Activated CD4-positive, alpha-beta memory T cell treated with anti-CD3 and anti-CD28 coated beads for 36 hours (primary cell): ENCODE measurements at regions of chr14 and their contacts with region 1.

Region 1: GRCh38 chr14:21103710-21104447 is 3.0 kb downstream of the TMEM253 start:
- DNase-seq: peak; percentile 96
- H3K4me3 Mint-ChIP-seq: peak overlapping the region; percentile 85
- H3K27ac Mint-ChIP-seq: peak overlapping the region; percentile 76
- H3K4me1 Mint-ChIP-seq: peaks cover 41% of the 10 kb centered on the region
- H3K27me3 Mint-ChIP-seq: no peaks in the 10 kb centered on the region

Region 2: GRCh38 chr14:20454516-20455354 is 649.1 kb before region 1 on chr14 and contains the starts of genes APEX1 and OSGEP:
- CTCF ChIA-PET with region 1: no interaction called
- POLR2A ChIA-PET with region 1: no interaction called
- intact Hi-C with region 1: loop called (anchors 10 kb)
- DNase-seq: peak; percentile 99
- H3K4me3 Mint-ChIP-seq: peak within 1 kb of the TSS; percentile 13
- H3K27ac Mint-ChIP-seq: no peak within 1 kb of the TSS
- H3K4me1 Mint-ChIP-seq: peaks cover 22% of the 10 kb centered on the region
- H3K27me3 Mint-ChIP-seq: no peaks in the 10 kb centered on the region
- total RNA-seq, gene APEX1: 186 to 193 TPM
- total RNA-seq, gene OSGEP: 39.2 to 41.0 TPM

Region 3: GRCh38 chr14:20873370-20874177 is 230.3 kb before region 1 on chr14:
- CTCF ChIA-PET with region 1: interaction called, 4 read pairs
- POLR2A ChIA-PET with region 1: no interaction called
- intact Hi-C with region 1: loop called (anchors 5 kb)
- DNase-seq: peak; percentile 91
- H3K4me3 Mint-ChIP-seq: peak overlapping the region; percentile 13
- H3K27ac Mint-ChIP-seq: no peak overlapping the region
- H3K4me1 Mint-ChIP-seq: peaks cover 15% of the 10 kb centered on the region
- H3K27me3 Mint-ChIP-seq: no peaks in the 10 kb centered on the region

Region 4: GRCh38 chr14:20989572-20990551 is 114.0 kb before region 1 on chr14 and contains the start of gene METTL17:
- CTCF ChIA-PET with region 1: interaction called, 10 read pairs
- POLR2A ChIA-PET with region 1: no interaction called
- intact Hi-C with region 1: loop called (anchors 1 kb)
- DNase-seq: peak; percentile 94
- H3K4me3 Mint-ChIP-seq: peak within 1 kb of the TSS; percentile 91
- H3K27ac Mint-ChIP-seq: peak within 1 kb of the TSS; percentile 84
- H3K4me1 Mint-ChIP-seq: peaks cover 30% of the 10 kb centered on the region
- H3K27me3 Mint-ChIP-seq: no peaks in the 10 kb centered on the region
- total RNA-seq, gene METTL17: 74.9 to 78.9 TPM

Region 5: GRCh38 chr14:21071225-21072030 is 32.5 kb before region 1 on chr14:
- CTCF ChIA-PET with region 1: interaction called, 86 read pairs
- POLR2A ChIA-PET with region 1: interaction called, 10 read pairs
- intact Hi-C with region 1: loop called (anchors 1 kb)
- DNase-seq: peak; percentile 83
- H3K4me3 Mint-ChIP-seq: peak overlapping the region; percentile 60
- H3K27ac Mint-ChIP-seq: no peak overlapping the region
- H3K4me1 Mint-ChIP-seq: peaks cover 33% of the 10 kb centered on the region
- H3K27me3 Mint-ChIP-seq: peaks cover 49% of the 10 kb centered on the region

Region 6: GRCh38 chr14:21092273-21093011 is 11.4 kb before region 1 on chr14:
- CTCF ChIA-PET with region 1: interaction called, 170 read pairs
- POLR2A ChIA-PET with region 1: interaction called, 5 read pairs
- intact Hi-C with region 1: loop called (anchors 1 kb)
- DNase-seq: peak; percentile 92
- H3K4me3 Mint-ChIP-seq: no peak overlapping the region
- H3K27ac Mint-ChIP-seq: no peak overlapping the region
- H3K4me1 Mint-ChIP-seq: peaks cover 21% of the 10 kb centered on the region
- H3K27me3 Mint-ChIP-seq: no peaks in the 10 kb centered on the region

Region 7: GRCh38 chr14:21123429-21123828 is 19.6 kb after region 1 on chr14:
- CTCF ChIA-PET with region 1: interaction called, 13 read pairs
- POLR2A ChIA-PET with region 1: no interaction called
- intact Hi-C with region 1: no loop called
- DNase-seq: no peak
- H3K4me3 Mint-ChIP-seq: no peak overlapping the region
- H3K27ac Mint-ChIP-seq: no peak overlapping the region
- H3K4me1 Mint-ChIP-seq: no peaks in the 10 kb centered on the region
- H3K27me3 Mint-ChIP-seq: peaks cover 12% of the 10 kb centered on the region

Region 8: GRCh38 chr14:21163871-21164291 is 60.0 kb after region 1 on chr14:
- CTCF ChIA-PET with region 1: no interaction called
- POLR2A ChIA-PET with region 1: no interaction called
- intact Hi-C with region 1: no loop called
- DNase-seq: no peak
- H3K4me3 Mint-ChIP-seq: no peak overlapping the region
- H3K27ac Mint-ChIP-seq: no peak overlapping the region
- H3K4me1 Mint-ChIP-seq: no peaks in the 10 kb centered on the region
- H3K27me3 Mint-ChIP-seq: peaks cover 17% of the 10 kb centered on the region